Naive thymus-derived CD8-positive, alpha-beta T cell (primary cell): ENCODE measurements at regions of chr1 and their contacts with region 1.

Region 1: DNA sequence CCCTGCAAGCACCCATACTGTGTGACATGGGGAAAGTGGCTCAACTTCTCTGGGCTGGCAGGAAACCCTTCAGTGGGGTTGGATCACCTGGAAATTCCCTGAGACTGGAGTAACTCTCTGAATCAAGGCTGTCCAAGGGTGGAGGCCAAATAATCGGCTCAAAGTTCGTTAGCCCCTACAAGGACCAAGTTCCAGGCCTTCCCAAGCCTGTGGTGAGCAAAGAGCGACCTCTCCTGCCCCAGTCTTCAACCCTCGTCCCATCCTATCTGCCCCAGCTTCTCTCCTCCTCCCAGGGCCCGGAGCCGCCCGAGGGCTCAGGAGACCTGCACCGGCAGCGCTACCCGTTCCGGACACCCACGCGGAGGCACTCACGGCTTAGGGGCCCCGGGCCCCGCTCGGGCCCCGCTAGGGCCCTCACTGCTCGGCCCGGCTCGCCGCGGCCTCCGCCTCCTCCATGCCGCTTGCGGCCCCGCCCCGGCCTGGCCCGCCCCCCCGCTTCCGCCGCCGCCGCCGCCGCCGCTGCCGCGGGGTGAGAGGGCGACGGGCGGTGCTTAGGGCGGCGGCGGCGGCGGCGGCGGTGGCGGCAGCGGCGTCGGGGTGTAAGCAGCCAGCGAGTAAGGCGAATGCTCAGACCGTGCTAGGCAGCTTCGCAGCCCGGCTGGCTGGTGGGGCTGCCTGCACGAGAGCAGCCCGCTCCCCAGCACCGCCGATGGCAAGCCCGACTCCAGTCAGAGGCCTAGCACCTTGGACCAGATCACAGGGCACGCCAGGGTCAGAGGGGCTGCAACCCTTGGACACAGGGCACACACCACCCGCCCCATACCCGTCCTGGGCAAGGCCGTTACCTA is at the start of gene POMGNT1:
- DNase-seq: peak; percentile 55 to 80 (median 75)
- ATAC-seq: peak; percentile 87 to 91
- H3K4me3 Mint-ChIP-seq: peak within 1 kb of the TSS; percentile 74 to 91 (median 82)
- H3K27ac Mint-ChIP-seq: peak within 1 kb of the TSS; percentile 51 to 92 (median 85)
- H3K4me1 Mint-ChIP-seq: peaks cover 12 to 43% (median 34%) of the 10 kb centered on the region in 4 donors
- H3K27me3 Mint-ChIP-seq: no peaks in the 10 kb centered on the region
- polyA plus RNA-seq, gene POMGNT1: 23.5 to 33.4 (median 24.0) TPM

Region 2: DNA sequence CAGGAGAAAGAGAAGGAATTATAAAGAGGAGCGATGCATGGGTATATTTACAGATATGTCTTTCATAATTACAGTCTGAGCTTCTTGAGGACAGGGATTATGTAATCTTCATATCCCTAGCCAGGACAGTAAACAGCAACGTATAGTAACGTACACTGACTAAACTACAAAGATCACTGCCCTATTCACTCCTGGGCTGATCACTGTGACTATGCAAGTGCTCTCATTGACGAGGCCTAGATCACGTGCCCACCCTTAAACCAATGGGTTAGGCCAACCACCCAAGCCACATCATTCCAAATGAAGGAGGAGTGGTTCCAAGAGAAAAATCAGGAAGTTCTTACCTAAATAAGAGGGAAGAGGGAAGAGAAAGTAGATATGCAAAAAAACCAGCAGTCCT is 84.2 kb before region 1 on chr1:
- POLR2A ChIA-PET with region 1: no interaction called
- DNase-seq: no peak
- ATAC-seq: no peak
- H3K4me3 Mint-ChIP-seq: no peak overlapping the region
- H3K27ac Mint-ChIP-seq: no peak overlapping the region
- H3K4me1 Mint-ChIP-seq: no peaks in the 10 kb centered on the region
- H3K27me3 Mint-ChIP-seq: peaks cover 0 to 7% (median 1%) of the 10 kb centered on the region in 5 donors

Region 3: GRCh38 chr1:46155248-46155750 is 42.9 kb before region 1 on chr1:
- POLR2A ChIA-PET with region 1: no interaction called
- DNase-seq: no peak
- ATAC-seq: no peak
- H3K4me3 Mint-ChIP-seq: no peak overlapping the region
- H3K27ac Mint-ChIP-seq: no peak overlapping the region
- H3K4me1 Mint-ChIP-seq: no peaks in the 10 kb centered on the region
- H3K27me3 Mint-ChIP-seq: no peaks in the 10 kb centered on the region

Region 4: DNA sequence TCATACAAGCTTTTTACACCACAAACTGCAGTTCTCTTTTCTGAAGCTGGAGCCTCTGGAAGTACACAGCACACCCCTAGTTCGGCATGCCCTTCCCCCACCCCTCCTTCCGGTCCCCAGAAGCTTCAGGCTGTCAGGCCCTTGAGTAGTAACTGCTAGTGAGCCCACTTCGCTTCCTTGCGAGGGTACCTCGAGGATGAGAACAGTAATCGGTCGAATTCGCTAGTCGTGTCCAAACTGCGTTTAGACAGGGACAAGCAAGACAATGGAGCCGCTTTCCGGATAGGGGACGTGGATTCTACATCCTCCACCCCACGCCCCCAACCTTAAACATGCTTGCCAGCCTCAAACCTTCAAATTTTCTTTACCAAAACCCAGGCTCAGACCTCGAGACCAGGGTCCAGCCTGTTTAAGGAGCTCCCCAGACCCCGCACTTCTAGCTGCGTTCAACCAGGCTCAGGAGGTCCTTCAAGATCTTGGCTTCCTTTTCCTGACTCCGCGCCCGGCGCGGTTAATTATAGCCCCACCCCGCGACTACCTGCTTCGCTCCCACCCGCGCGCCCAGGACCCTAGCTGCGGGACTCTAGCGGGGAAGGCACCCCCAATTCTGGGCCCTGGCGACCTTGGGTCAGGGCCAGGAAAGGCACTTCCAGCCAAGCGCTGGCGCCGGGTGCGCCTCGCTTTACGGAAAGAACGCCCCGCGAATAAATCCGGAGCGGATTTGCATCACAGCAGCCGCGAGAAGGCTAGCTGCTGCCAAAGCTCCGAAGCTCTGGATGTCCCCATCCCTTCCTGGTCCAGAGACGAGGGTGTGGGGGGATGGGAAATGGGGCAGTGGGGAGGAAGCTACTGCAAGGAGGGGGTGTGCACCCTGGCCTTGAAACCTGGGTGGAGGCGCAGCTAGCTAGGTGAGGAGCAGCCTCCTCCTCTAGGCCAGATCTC is 31.4 kb before region 1 on chr1:
- POLR2A ChIA-PET with region 1: interaction called, 11 read pairs
- DNase-seq: peak in 9 of 10 donors; percentile 19 to 82 (median 54)
- ATAC-seq: peak; percentile 84
- H3K4me3 Mint-ChIP-seq: peak overlapping the region; percentile 85 to 95 (median 90)
- H3K27ac Mint-ChIP-seq: peak overlapping the region; percentile 92 to 98 (median 96)
- H3K4me1 Mint-ChIP-seq: peaks cover 16 to 25% (median 19%) of the 10 kb centered on the region in 4 donors
- H3K27me3 Mint-ChIP-seq: peaks cover 0 to 9% (median 0%) of the 10 kb centered on the region in 5 donors